Activated naive CD4-positive, alpha-beta T cell treated with anti-CD3 and anti-CD28 coated beads, Interleukin-2, amount 10 ng/mL, durations not matched to agents 7 days and 5 days (primary cell): ENCODE measurements at regions of chr11 and their contacts with region 1.

Region 1: DNA sequence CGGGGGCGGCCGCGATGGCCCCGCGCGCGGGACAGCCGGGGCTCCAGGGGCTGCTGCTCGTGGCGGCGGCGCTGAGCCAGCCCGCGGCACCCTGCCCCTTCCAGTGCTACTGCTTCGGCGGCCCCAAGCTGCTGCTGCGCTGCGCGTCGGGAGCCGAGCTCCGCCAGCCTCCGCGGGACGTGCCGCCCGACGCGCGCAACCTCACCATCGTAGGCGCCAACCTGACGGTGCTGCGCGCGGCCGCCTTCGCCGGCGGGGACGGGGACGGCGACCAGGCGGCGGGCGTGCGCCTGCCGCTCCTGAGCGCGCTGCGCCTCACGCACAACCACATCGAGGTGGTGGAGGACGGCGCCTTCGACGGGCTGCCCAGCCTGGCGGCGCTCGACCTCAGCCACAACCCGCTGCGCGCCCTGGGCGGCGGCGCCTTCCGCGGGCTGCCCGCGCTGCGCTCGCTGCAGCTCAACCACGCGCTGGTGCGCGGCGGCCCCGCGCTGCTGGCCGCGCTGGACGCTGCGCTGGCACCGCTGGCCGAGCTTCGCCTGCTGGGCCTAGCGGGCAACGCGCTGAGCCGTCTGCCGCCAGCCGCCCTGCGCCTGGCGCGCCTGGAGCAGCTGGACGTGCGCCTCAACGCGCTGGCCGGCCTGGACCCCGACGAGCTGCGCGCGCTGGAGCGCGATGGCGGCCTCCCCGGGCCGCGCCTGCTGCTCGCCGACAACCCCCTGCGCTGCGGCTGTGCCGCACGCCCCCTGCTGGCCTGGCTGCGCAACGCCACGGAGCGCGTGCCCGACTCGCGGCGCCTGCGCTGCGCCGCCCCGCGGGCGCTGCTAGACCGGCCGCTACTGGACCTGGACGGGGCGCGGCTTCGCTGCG is 697 bp downstream of the TPBGL start:
- DNase-seq: peak; percentile 87
- H3K4me3 Mint-ChIP-seq: peak overlapping the region; percentile 62
- H3K27ac Mint-ChIP-seq: no peak overlapping the region
- H3K4me1 Mint-ChIP-seq: peaks cover 13% of the 10 kb centered on the region
- H3K27me3 Mint-ChIP-seq: peaks cover 90% of the 10 kb centered on the region

Region 2: DNA sequence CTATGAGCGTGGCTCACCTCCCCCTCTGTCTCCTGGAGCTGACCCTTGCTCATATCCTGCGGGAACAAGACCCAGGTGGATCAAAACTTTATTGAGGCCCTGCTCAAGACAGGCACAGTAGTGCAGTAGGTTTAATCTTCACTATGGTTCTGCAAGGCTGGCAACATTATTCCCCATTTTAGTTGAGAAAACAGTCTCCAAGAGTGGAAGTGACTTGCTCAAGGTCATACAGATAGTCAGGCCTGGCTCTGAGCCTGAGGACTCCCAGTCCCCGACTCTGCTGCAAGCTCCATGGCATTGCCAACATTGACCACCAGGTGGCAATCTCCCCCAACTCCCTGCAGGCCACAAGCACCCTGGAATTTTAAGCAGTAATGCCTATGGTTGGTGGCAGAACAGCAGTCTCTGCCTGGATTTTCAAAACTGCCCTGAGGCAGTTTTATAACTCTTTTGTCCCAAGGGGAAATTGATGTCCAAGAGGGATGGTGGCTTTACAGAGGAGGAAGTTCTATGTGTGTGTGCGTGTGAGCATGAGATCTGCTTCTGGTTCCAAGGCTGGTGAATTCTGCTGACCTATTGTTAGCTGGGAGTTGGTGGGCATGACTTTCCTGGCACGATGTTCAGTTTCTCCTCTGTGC is 218.4 kb before region 1 on chr11:
- CTCF ChIA-PET with region 1: interaction called, 66 read pairs
- DNase-seq: peak; percentile 85
- H3K4me3 Mint-ChIP-seq: no peak overlapping the region
- H3K27ac Mint-ChIP-seq: no peak overlapping the region
- H3K4me1 Mint-ChIP-seq: no peaks in the 10 kb centered on the region
- H3K27me3 Mint-ChIP-seq: no peaks in the 10 kb centered on the region

Region 3: GRCh38 chr11:75214411-75214821 is 26.9 kb before region 1 on chr11:
- CTCF ChIA-PET with region 1: interaction called, 13 read pairs
- DNase-seq: peak; percentile 93
- H3K4me3 Mint-ChIP-seq: no peak overlapping the region
- H3K27ac Mint-ChIP-seq: no peak overlapping the region
- H3K4me1 Mint-ChIP-seq: no peaks in the 10 kb centered on the region
- H3K27me3 Mint-ChIP-seq: peaks cover 24% of the 10 kb centered on the region

Region 4: DNA sequence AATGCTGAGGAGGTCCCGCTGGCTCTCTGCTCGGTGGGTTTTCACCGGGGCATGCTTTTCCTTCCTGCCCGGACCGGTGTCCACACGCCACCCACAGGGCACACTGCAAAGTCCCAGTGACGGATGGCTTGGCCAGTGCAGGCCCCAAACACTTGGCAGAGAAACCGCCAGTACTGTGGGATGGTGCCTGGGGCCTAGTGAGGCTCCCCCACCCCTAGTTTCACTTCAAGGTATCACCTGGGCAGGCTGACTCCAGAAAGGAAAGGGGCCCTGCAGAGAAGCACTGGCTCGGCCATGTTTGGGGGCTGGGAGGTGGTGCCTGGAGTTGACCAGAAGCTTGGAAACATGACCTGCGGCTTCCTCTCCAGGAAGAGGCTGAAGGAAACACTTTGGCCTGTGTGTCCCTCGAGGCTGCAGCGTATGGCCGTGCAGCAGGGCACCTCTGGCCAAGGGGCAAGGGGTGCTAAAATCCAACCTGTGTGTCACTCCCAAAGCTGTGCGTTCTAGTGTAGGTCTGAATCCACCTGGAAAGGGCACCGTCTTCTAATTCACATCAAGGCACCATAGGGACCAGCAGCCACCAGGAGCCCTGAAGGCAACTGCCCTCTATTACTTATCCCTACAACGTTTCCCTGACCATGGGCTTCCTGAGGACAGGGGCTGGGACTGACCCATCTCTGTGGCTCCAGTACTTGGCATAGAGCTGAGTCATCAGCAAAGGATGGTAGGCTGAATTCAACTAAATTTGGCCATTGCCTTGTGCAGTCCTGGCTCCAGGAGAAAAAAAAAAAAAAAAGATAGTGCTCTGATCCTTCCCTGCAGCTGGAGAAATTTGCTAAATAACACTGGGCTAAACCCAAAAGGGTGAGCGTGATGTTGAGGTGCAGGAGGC is 21.9 kb after region 1 on chr11:
- CTCF ChIA-PET with region 1: interaction called, 13 read pairs
- DNase-seq: peak; percentile 20
- H3K4me3 Mint-ChIP-seq: no peak overlapping the region
- H3K27ac Mint-ChIP-seq: no peak overlapping the region
- H3K4me1 Mint-ChIP-seq: peaks cover 43% of the 10 kb centered on the region
- H3K27me3 Mint-ChIP-seq: peaks cover 5% of the 10 kb centered on the region